ENCODE measurements at regions of chr7 and their contacts with region 1.

Region 1: GRCh38 chr7:74449809-74450397 is 3.8 kb upstream of the GTF2IRD1 start:
- DNase-seq: peak in 1 of 2 donors; percentile 76
- H3K4me3 ChIP-seq: no peak overlapping the region
- H3K27ac ChIP-seq: no peak overlapping the region
- H3K4me1 ChIP-seq: peaks cover 0 to 14% of the 10 kb centered on the region in 2 donors
- H3K27me3 ChIP-seq: no peaks in the 10 kb centered on the region
- CTCF ChIP-seq: peak; percentile 68 to 88 (median 77)

Region 2: DNA sequence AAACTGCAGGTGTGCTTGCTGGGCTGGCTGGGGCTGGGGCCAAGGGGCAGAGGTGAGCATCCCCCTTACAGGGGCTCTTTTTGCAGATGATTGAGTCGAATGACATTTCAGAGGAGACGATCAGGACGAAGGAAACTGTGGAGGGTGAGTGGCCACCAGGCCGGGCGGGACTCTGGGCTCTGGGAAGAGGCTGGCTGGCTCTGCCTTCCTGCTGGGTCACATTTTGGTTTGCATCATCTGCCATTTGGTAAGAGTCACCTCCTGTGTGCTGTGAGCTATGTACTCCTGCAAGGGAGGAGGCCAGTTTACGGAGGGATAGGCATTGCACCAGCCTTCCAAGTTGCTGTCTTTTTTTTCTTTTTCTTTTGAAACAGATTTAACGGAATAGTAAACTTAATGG is 69.2 kb before region 1 on chr7:
- intact Hi-C with region 1: no loop called
- DNase-seq: no peak
- H3K4me3 ChIP-seq: no peak overlapping the region
- H3K27ac ChIP-seq: peak overlapping the region; percentile 45 to 68
- H3K4me1 ChIP-seq: no peaks in the 10 kb centered on the region
- H3K27me3 ChIP-seq: no peaks in the 10 kb centered on the region
- CTCF ChIP-seq: no peak

Region 3: DNA sequence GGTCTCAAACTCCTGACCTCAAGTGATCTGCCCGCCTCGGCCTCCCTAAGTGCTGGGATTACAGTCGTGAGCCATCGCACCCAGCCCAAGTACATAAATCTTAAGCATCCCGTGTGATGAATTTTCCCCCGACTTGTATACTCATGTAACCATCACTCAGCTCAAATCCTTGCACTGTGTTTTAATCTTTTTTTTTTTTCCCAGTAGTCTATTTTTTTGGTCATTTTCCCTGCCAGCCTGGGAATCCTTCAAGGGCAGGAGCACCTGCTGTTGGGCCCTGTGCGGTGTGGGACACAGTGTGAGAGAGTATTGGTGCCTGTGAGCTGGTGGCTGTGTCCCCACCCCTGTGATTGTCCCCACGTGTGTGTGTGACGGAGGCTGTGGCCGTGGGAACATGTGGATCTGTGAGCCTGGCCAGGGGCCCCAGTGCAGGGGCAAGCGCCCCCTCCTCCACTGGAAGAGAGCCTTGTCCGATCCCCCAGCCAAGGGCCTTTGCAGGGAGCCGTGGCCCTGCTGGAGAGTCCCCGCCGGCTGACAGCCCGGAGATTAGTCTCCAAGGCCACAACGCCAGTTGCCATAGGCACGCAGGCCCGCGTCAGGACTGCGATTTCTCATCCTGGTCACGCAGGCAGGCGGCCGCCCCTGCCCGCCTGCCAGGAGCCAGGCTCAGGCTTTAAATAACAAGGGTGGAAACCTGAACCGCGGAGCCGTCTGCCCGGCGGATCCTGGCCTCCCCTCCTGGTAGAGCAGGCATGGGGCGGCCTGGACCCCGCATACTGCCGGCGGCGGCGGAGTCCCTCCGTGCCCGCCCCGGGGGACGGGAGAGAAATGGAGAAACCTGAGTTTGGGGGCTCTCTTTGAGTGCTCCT is 30.3 kb after region 1 on chr7:
- intact Hi-C with region 1: loop called (anchors 1 kb)
- DNase-seq: peak; percentile 59 to 94
- H3K4me3 ChIP-seq: peak overlapping the region; percentile 45 to 57
- H3K27ac ChIP-seq: peak overlapping the region; percentile 90 to 95
- H3K4me1 ChIP-seq: peaks cover 25 to 44% of the 10 kb centered on the region in 2 donors
- H3K27me3 ChIP-seq: no peaks in the 10 kb centered on the region
- CTCF ChIP-seq: no peak

Region 4: DNA sequence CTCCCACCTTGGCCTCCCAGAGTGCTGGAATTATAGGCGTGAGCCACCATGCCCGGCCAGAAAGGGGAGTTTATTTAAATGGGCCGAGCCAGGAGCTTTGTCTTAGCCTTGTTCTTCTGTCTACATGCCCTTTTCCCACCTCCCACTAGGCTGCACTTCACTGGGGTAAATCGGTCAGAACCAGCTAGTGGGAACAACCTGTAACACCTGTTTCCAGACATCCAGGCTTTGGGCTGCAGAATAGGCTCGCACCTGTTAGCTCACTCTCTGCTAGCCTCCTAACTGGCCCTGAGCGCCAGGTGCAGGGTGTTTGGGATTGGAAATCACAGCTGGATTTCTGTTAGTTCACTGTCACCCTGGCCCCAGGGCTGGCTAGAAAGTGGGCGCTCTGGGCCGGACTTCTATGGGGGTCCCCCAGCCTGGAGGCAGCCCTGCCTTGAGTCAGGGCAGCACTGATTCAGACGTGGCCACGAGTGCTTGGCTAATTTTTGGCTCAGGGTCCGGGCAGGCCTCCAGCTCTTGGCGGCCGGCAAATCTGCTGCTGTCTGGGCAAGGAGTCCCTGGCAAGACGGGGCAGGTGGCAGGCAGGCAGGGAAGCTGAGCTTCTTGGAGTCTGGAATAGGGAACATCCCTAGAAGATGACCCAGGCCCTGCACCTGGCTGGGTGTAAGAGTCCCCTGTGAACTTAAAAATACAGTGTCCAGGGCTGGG is 52.4 kb after region 1 on chr7:
- intact Hi-C with region 1: loop called (anchors 5 kb)
- DNase-seq: no peak
- H3K4me3 ChIP-seq: no peak overlapping the region
- H3K27ac ChIP-seq: peak overlapping the region in 1 of 2 donors; percentile 15
- H3K4me1 ChIP-seq: peaks cover 0 to 8% of the 10 kb centered on the region in 2 donors
- H3K27me3 ChIP-seq: no peaks in the 10 kb centered on the region
- CTCF ChIP-seq: no peak

Region 5: DNA sequence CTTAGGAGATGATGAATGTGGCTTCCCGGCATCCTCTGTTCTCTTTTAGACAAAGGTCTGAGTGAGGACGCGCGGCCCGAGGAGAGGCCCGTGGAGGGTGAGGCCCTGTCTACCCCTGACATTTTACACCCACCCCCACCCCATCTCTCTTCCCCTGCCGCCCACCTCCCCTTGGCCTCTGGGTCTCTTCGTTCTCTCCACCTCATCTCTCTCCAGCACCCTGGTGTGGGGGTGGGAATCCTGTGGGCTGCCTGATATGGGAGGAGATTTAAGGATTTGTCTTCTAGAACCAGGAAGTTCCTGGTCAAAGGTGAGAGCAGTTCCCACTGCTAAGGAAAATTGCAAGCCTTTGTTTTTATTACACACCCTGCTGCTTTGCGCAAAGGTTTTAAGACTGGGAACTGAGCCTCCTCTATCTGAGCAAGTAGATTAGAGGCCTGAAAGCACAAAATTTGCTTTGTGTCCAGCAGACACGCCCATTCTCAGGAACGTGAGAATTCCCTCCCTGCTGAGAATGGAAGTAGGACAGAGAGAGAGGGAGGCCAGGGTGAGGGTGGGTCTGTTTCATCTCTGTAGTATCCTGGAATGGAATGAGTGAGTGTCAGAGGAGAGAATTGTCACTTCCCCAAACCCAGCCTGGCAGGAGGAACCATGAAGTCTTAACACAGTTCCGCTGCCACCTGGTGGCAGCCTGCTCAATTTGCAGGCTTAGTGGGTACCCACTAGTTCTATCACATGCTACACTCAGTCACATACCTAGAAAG is 95.0 kb after region 1 on chr7:
- intact Hi-C with region 1: loop called (anchors 5 kb)
- DNase-seq: no peak
- H3K4me3 ChIP-seq: no peak overlapping the region
- H3K27ac ChIP-seq: no peak overlapping the region
- H3K4me1 ChIP-seq: no peaks in the 10 kb centered on the region
- H3K27me3 ChIP-seq: no peaks in the 10 kb centered on the region
- CTCF ChIP-seq: peak in 2 of 3 experiments; percentile 17 to 39

Region 6: DNA sequence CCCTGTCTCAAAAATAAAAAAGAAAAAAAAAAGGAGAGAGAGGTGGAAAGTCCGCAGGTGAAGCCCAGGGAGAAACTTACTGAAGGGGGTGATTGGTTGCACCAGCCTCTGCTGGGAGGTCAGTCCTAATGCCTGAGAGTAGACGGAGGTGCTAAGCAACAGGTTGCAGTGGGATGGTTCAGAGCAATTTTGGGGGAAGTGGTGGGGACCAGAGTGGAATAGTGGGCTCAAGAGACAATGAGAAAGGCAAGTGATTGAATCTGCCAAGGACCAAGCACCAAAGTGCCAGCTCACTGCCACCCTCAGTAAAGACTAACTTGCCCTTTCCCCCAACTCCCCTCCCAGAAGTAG is 117.4 kb after region 1 on chr7:
- intact Hi-C with region 1: loop called (anchors 2 kb)
- DNase-seq: no peak
- H3K4me3 ChIP-seq: no peak overlapping the region
- H3K27ac ChIP-seq: no peak overlapping the region
- H3K4me1 ChIP-seq: no peaks in the 10 kb centered on the region
- H3K27me3 ChIP-seq: no peaks in the 10 kb centered on the region
- CTCF ChIP-seq: no peak

Region 7: GRCh38 chr7:74665296-74665938 is 215.5 kb after region 1 on chr7:
- intact Hi-C with region 1: loop called (anchors 10 kb)
- DNase-seq: peak in 1 of 2 donors; percentile 40
- H3K4me3 ChIP-seq: no peak overlapping the region
- H3K27ac ChIP-seq: no peak overlapping the region
- H3K4me1 ChIP-seq: peaks cover 0 to 11% of the 10 kb centered on the region in 2 donors
- H3K27me3 ChIP-seq: no peaks in the 10 kb centered on the region
- CTCF ChIP-seq: no peak

Measured in ascending aorta (tissue), 2 donors.